ENCODE measurements at regions of chr1 and their contacts with region 1.

Region 1: GRCh38 chr1:203871107-203871875 is 9.9 kb downstream of the SNRPE start:
- ATAC-seq: peak; percentile 76 to 93 (median 87)
- H3K4me3 ChIP-seq: no peak overlapping the region
- H3K27ac ChIP-seq: no peak overlapping the region
- H3K4me1 ChIP-seq: peaks cover 6% of the 10 kb centered on the region in 2 donors

Region 2: GRCh38 chr1:204041232-204041767 is 170.0 kb after region 1 on chr1:
- in situ Hi-C with region 1: no loop called
- ATAC-seq: peak; percentile 44 to 91 (median 82)
- H3K4me3 ChIP-seq: no peak overlapping the region
- H3K27ac ChIP-seq: peak overlapping the region in 1 of 2 donors; percentile 55
- H3K4me1 ChIP-seq: peaks cover 9 to 13% of the 10 kb centered on the region in 2 donors

Region 3: GRCh38 chr1:204123376-204123775 is 252.1 kb after region 1 on chr1:
- in situ Hi-C with region 1: loop called in 7 of 9 experiments (anchors 5 to 10 kb)
- ATAC-seq: peak in 2 of 8 experiments; percentile 37 to 49
- H3K4me3 ChIP-seq: no peak overlapping the region
- H3K27ac ChIP-seq: no peak overlapping the region
- H3K4me1 ChIP-seq: peaks cover 19 to 22% of the 10 kb centered on the region in 2 donors

Measured in motor neuron (in vitro differentiated cells).